GM12878 (cell line): ENCODE measurements at regions of chr11 and their contacts with region 1.

Region 1: GRCh38 chr11:6737872-6738466 is 33.8 kb downstream of the OR2AG2 start:
- DNase-seq: no peak
- ATAC-seq: peak; percentile 87
- H3K4me3 ChIP-seq: no peak overlapping the region
- H3K27ac ChIP-seq: no peak overlapping the region
- H3K4me1 ChIP-seq: peaks cover 27% of the 10 kb centered on the region
- H3K27me3 ChIP-seq: no peaks in the 10 kb centered on the region
- CTCF ChIP-seq: peak; percentile 67 to 80 (median 73)
- EP300 ChIP-seq: no peak
- POLR2A ChIP-seq: no peak
- RAD21 ChIP-seq: peak; percentile 68

Region 2: DNA sequence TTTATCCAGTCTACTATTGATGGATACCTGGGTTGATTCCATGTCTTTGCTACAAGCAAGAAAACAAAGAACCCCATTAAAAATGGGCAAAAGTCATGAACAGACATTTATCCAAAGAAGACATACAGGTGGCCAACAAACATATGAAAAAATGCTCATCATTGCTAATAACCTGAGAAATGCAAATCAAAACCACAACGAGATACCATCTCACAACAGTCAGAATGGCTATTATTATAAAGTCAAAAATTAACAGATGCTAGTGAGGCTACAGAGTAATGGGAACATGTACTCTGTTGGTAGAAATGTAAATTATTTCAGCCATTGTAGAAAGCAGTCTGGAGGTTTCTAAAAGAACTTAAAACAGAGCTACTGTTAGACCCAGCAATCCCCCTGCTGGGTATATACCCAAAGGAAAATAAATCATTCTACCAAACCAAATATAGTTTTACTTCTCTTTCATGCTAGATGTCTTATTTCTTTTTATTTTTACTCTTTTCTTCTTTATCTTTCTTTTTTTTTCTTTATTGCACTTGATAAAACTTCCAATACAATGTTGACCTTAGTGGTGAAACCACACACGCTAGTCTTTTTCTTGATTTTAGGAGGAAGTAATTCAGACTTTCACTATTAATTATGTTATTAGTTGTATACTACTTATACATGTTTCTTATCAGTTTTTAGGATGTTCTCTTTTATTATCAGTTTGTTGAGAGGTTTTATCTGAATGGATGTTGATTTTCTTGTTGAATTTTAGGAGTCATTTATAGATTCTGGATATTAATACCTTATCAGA is 1034.0 kb before region 1 on chr11:
- CTCF ChIA-PET with region 1: no interaction called
- POLR2A ChIA-PET with region 1: no interaction called
- RAD21 ChIA-PET with region 1: no interaction called
- SMC1A ChIA-PET with region 1: no interaction called
- in situ Hi-C with region 1: loop called (anchors 10 kb)
- intact Hi-C with region 1: loop called (anchors 10 kb)
- DNase-seq: no peak
- ATAC-seq: peak; percentile 77
- H3K4me3 ChIP-seq: no peak overlapping the region
- H3K27ac ChIP-seq: no peak overlapping the region; the same call in 1 of the 2 replicates
- H3K4me1 ChIP-seq: peaks cover 3% of the 10 kb centered on the region; the same call in 1 of the 2 replicates
- H3K27me3 ChIP-seq: no peaks in the 10 kb centered on the region
- CTCF ChIP-seq: no peak
- EP300 ChIP-seq: no peak
- POLR2A ChIP-seq: no peak
- RAD21 ChIP-seq: no peak

Region 3: DNA sequence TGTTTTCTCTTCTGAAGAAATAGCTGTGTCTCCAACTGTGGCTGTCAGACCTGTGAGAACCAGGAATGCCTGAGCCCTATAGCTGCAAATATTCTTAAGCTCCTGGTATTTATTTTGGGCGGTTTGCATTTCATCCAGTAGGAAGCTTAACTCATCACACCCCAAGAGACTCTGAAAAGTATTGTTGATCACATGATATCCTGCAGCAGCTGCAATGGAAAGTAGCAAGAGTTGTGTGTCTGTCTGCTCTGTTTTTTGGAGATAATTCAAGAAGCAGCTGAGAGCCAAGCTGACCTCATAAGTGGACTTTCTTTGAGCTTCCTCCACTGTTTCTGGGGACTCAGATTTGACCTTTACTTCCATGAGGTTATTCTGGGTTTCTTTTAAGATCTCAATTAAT is 18.4 kb before region 1 on chr11:
- CTCF ChIA-PET with region 1: interaction called, 13 read pairs
- POLR2A ChIA-PET with region 1: no interaction called
- RAD21 ChIA-PET with region 1: no interaction called
- SMC1A ChIA-PET with region 1: interaction called, 23 read pairs
- in situ Hi-C with region 1: no loop called
- intact Hi-C with region 1: no loop called
- DNase-seq: no peak
- ATAC-seq: no peak
- H3K4me3 ChIP-seq: no peak overlapping the region
- H3K27ac ChIP-seq: no peak overlapping the region
- H3K4me1 ChIP-seq: no peaks in the 10 kb centered on the region
- H3K27me3 ChIP-seq: no peaks in the 10 kb centered on the region
- CTCF ChIP-seq: no peak
- EP300 ChIP-seq: no peak
- POLR2A ChIP-seq: no peak
- RAD21 ChIP-seq: no peak

Region 4: DNA sequence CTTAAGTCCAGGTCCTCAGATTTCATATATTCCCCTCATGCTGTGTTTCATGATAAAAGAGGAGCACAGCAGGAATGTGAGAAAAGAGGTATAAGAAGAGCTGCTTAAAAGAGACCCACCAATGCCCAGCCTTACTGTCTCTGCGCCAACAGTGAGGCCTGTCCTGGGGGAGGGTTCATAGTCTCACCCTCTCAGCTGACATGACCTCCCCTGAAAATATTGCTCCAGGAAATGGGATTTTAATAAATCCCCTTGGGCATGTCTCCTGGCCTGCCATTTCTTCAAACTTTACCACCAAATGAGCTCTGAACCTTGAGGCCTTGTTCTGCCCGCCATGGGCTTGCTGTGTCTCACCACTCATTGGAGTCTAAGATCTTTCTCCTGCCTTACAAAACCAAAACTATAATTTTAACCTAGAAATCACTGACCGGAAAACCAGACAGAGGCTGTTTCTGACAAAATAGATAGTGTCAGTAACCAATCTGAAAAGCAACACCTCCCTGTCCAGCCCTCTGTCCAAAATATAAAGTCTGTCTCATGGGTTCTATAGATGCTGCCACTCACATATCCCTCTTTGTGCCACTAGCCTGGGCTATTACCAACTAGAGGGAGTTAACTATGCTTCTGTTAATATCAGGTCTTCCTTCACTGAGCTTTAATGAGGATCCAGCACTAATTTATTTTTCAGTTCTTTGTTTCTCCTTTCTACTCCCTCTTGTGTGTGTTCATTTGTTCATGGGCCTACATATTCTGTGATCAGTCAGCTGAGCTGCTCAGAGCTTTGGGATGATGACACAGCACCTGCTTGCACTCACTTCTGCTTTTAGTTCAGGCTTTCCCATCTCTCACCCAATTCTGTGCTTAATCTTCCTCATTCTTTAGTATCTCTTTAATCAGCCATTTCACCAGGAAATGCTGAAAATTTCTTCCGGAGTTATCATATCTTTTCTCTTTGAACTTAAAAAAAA is 34.2 kb after region 1 on chr11 and contains the start of gene OR2AG2:
- CTCF ChIA-PET with region 1: interaction called, 15 read pairs
- POLR2A ChIA-PET with region 1: no interaction called
- RAD21 ChIA-PET with region 1: no interaction called
- SMC1A ChIA-PET with region 1: interaction called, 6 read pairs
- in situ Hi-C with region 1: no loop called
- intact Hi-C with region 1: no loop called
- DNase-seq: peak; percentile 37
- ATAC-seq: peak; percentile 98
- H3K4me3 ChIP-seq: no peak within 1 kb of the TSS
- H3K27ac ChIP-seq: no peak within 1 kb of the TSS
- H3K4me1 ChIP-seq: no peaks in the 10 kb centered on the region; the same call in 1 of the 2 replicates
- H3K27me3 ChIP-seq: 0 out of 4 replicates have a peak, but pooled peaks cover 0 to 2% of the 10 kb centered on the region in 2 experiments
- CTCF ChIP-seq: no peak
- EP300 ChIP-seq: no peak
- POLR2A ChIP-seq: no peak
- RAD21 ChIP-seq: no peak
- polyA plus RNA-seq, gene OR2AG2: not detected

Region 5: GRCh38 chr11:7046474-7047175 is 308.7 kb after region 1 on chr11:
- CTCF ChIA-PET with region 1: no interaction called
- POLR2A ChIA-PET with region 1: no interaction called
- RAD21 ChIA-PET with region 1: no interaction called
- SMC1A ChIA-PET with region 1: no interaction called
- in situ Hi-C with region 1: no loop called
- intact Hi-C with region 1: no loop called
- DNase-seq: no peak
- ATAC-seq: no peak
- H3K4me3 ChIP-seq: no peak overlapping the region
- H3K27ac ChIP-seq: no peak overlapping the region
- H3K4me1 ChIP-seq: no peaks in the 10 kb centered on the region
- H3K27me3 ChIP-seq: no peaks in the 10 kb centered on the region; a peak in 1 of 4 replicates
- CTCF ChIP-seq: no peak
- EP300 ChIP-seq: no peak
- POLR2A ChIP-seq: no peak
- RAD21 ChIP-seq: no peak